ENCODE measurements at regions of chr1 and their contacts with region 1.

Region 1: DNA sequence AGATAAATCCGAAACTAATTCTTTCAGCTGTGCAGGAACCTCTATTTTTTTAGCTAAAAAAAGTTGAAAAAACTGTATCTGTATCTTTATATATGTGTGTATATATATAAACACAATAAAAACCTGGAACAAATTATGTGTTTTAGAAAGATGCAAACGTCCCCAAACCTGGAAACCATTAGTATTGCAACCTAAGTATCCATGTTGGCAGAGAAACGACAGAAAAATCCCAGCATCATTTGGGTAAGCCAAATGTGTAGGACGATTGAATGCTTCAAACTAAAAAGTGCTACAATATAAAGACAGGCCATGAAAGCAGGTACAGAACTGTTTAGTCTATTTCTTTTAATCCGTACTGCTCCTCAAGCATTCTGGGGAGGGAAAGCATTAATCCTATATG is 87.9 kb downstream of the AHCTF1 start:
- DNase-seq: no peak
- H3K4me3 ChIP-seq: no peak overlapping the region
- H3K27ac ChIP-seq: no peak overlapping the region
- H3K4me1 ChIP-seq: no peaks in the 10 kb centered on the region
- H3K27me3 ChIP-seq: no peaks in the 10 kb centered on the region
- CTCF ChIP-seq: no peak

Region 2: GRCh38 chr1:246497331-246497915 is 346.5 kb before region 1 on chr1:
- intact Hi-C with region 1: no loop called
- DNase-seq: no peak
- H3K4me3 ChIP-seq: no peak overlapping the region
- H3K27ac ChIP-seq: no peak overlapping the region
- H3K4me1 ChIP-seq: no peaks in the 10 kb centered on the region
- H3K27me3 ChIP-seq: no peaks in the 10 kb centered on the region
- CTCF ChIP-seq: peak; percentile 54 to 69 (median 58)

Region 3: GRCh38 chr1:246893191-246893939 is 49.5 kb after region 1 on chr1:
- intact Hi-C with region 1: loop called (anchors 10 kb)
- DNase-seq: no peak
- H3K4me3 ChIP-seq: no peak overlapping the region
- H3K27ac ChIP-seq: no peak overlapping the region
- H3K4me1 ChIP-seq: no peaks in the 10 kb centered on the region
- H3K27me3 ChIP-seq: no peaks in the 10 kb centered on the region
- CTCF ChIP-seq: no peak

Region 4: DNA sequence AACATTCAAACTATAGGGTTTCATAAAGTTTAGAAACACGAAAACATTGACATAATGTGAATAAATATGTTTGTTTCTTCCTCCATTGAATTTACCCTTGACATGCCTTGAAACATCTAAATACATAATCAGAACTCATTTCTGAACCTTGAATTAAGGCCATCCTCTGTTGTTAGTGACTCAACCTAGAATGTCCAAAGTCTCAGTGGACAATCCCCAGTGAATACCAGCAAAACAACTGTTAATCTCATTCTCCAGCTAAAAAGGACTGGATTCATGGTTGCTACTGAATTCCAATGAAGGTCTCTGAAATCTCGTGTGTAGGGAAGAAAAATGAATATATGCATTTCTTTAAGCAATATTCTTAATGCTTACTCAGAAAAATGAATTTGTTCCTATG is 1185.9 kb after region 1 on chr1 and contains the start of gene OR2L2:
- intact Hi-C with region 1: no loop called
- DNase-seq: no peak
- H3K4me3 ChIP-seq: no peak within 1 kb of the TSS
- H3K27ac ChIP-seq: no peak within 1 kb of the TSS
- H3K4me1 ChIP-seq: no peaks in the 10 kb centered on the region
- H3K27me3 ChIP-seq: no peaks in the 10 kb centered on the region
- CTCF ChIP-seq: no peak
- total RNA-seq, gene OR2L2: not detected